Mucosa of descending colon (tissue), 3 donors: ENCODE measurements at regions of chr9 and their contacts with region 1.

Region 1: DNA sequence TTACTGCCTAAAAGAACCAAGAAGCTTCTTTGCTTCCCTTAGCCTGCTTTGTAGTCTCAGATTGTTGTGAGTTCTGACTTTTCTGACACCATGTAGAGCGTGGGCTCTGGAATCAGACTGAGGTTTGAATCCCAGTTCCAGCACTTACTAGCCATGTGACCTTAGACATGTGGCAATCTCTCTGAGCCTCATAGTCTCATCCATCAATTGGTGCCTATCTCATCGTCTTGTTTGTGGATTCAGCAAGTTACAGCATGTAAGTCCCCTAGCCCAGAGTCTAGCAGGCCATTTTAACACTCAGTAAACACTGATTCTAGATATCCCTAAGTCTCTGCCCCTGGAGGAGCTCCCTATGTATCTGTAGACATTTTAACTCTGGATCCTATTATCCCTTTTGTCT is 94.7 kb downstream of the ANGPTL2 start:
- DNase-seq: no peak
- ATAC-seq: no peak
- H3K4me3 ChIP-seq: no peak overlapping the region
- H3K4me1 ChIP-seq: no peaks in the 10 kb centered on the region
- CTCF ChIP-seq: no peak

Region 2: GRCh38 chr9:126756876-126757415 is 270.7 kb before region 1 on chr9:
- intact Hi-C with region 1: no loop called
- DNase-seq: no peak
- ATAC-seq: no peak
- H3K4me3 ChIP-seq: no peak overlapping the region
- H3K4me1 ChIP-seq: peaks cover 5% of the 10 kb centered on the region
- CTCF ChIP-seq: no peak

Region 3: GRCh38 chr9:127083138-127083980 is 55.7 kb after region 1 on chr9:
- intact Hi-C with region 1: loop called in 1 of 2 experiments (anchors 2 kb)
- DNase-seq: no peak
- ATAC-seq: no peak
- H3K4me3 ChIP-seq: no peak overlapping the region
- H3K4me1 ChIP-seq: no peaks in the 10 kb centered on the region
- CTCF ChIP-seq: no peak